ENCODE measurements at regions of chr5 and their contacts with region 1.

Region 1: GRCh38 chr5:59007460-59008063 is 424.7 kb downstream of the RAB3C start:
- DNase-seq: peak in 2 of 9 experiments; percentile 16 to 32
- ATAC-seq: no peak
- H3K4me3 ChIP-seq: no peak overlapping the region
- H3K4me3 Mint-ChIP-seq: no peak overlapping the region
- H3K27ac ChIP-seq: no peak overlapping the region
- H3K27ac Mint-ChIP-seq: no peak overlapping the region
- H3K4me1 ChIP-seq: peaks cover 5% of the 10 kb centered on the region
- H3K4me1 Mint-ChIP-seq: peaks cover 63% of the 10 kb centered on the region
- H3K27me3 ChIP-seq: no peaks in the 10 kb centered on the region
- H3K27me3 Mint-ChIP-seq: no peaks in the 10 kb centered on the region
- CTCF ChIP-seq: peak; percentile 51

Region 2: GRCh38 chr5:58891971-58892343 is 115.6 kb before region 1 on chr5:
- CTCF ChIA-PET with region 1: interaction called, 16 read pairs
- POLR2A ChIA-PET with region 1: no interaction called
- intact Hi-C with region 1: loop called in 1 of 2 experiments (anchors 1 kb)
- DNase-seq: no peak
- ATAC-seq: no peak
- H3K4me3 ChIP-seq: no peak overlapping the region
- H3K4me3 Mint-ChIP-seq: no peak overlapping the region
- H3K27ac ChIP-seq: no peak overlapping the region
- H3K27ac Mint-ChIP-seq: no peak overlapping the region
- H3K4me1 ChIP-seq: no peaks in the 10 kb centered on the region
- H3K4me1 Mint-ChIP-seq: peaks cover 12% of the 10 kb centered on the region
- H3K27me3 ChIP-seq: no peaks in the 10 kb centered on the region
- H3K27me3 Mint-ChIP-seq: peaks cover 2% of the 10 kb centered on the region
- CTCF ChIP-seq: no peak